Activated T-helper 2 cell treated with anti-CD3 and anti-CD28 coated beads, Interferon-gamma antibody, Interleukin-2, Interleukin-4, amounts not matched to agents 10 μg/mL and 5 μg/mL and 100 μg/mL, durations not matched to agents 14 hours and 24 hours and 36 hours (primary cell): ENCODE measurements at regions of chr14 and their contacts with region 1.

Region 1: DNA sequence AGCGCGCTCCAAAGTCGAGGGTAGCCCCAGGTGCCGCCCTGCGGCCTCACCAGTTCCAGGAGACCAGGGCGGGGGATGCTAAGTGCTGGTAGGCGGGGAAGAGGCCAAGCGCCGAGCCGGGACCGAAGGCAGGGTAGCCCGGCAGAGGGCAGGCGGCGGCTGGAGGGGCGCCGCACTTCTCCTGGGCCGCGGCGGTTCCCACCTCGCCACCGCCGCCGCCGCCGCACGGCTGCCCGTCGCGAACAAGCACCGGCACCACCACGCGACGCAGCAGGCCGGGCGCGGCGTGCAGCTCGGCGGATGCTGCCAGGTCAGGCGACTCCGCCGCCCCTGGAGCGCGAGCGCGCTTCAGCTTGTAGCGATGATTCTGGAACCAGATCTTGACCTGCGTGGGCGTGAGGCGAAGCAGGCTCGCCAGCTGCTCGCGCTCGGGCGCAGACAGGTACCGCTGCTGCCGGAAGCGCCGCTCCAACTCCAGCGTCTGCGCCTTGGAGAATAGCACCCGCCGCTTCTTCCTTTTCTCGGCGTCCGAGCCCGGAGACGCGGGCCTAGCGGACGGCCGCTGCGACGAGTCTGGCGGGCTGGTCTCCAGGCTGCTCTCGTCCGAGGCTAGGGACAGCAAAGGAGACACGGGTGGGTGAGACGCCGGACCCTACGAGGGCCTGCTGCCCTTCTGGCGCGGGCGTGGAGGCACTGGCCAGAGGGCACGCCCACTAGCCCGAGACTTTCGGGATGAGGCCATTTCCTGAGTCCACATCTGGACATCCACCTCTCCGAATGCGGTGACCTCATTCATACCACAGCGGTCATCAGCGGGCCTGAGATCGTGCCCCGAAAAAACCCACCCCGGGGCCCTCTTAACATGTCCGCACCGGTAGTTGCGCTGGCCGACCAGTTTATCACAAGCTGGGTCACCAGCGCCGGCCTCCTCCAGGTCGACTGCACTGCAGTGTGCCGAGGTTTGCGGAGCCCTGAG is 1.3 kb downstream of the NKX2-8 start:
- DNase-seq: no peak
- H3K4me3 Mint-ChIP-seq: no peak overlapping the region
- H3K27ac Mint-ChIP-seq: no peak overlapping the region
- H3K4me1 Mint-ChIP-seq: no peaks in the 10 kb centered on the region
- H3K27me3 Mint-ChIP-seq: peaks cover 61% of the 10 kb centered on the region

Region 2: GRCh38 chr14:36442824-36443241 is 138.3 kb before region 1 on chr14:
- intact Hi-C with region 1: no loop called
- DNase-seq: no peak
- H3K4me3 Mint-ChIP-seq: no peak overlapping the region
- H3K27ac Mint-ChIP-seq: no peak overlapping the region
- H3K4me1 Mint-ChIP-seq: no peaks in the 10 kb centered on the region
- H3K27me3 Mint-ChIP-seq: peaks cover 10% of the 10 kb centered on the region

Region 3: DNA sequence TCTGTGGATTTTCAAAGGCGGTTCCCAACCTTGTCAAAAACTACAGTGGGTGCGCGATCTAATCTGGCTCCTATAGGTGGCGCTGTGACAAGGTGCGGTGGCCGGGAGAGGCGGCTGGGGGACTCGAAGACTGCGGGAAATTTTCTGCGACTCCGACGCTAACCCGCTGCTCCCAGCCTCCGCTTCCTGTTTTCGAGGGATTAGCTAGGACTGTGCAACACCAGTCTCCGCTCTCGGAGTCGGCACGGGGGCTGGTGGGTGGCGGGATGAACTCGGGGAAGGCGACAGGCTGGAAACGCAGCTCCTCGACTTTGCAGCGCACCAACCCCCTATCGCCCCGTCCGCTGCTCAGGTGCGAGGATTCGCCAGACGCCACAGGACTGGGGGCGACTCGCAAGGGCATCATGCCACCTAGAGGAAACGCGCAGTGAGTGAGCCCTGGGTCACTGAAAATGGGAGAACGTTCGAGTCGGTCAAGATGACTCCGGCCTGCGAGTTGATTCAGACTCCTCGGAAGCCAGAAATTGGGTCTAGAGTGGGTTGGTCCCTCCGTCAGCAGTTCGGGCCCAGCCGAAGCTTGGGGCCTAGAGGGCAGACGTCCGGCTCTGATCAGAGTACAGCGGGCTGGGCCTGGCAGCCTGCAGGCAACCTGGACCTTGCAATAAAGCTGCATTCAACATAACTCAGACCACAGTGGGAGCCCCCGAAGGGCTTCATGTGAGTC is 75.0 kb after region 1 on chr14:
- intact Hi-C with region 1: loop called (anchors 2 kb)
- DNase-seq: no peak
- H3K4me3 Mint-ChIP-seq: no peak overlapping the region
- H3K27ac Mint-ChIP-seq: no peak overlapping the region
- H3K4me1 Mint-ChIP-seq: peaks cover 4% of the 10 kb centered on the region
- H3K27me3 Mint-ChIP-seq: peaks cover 91% of the 10 kb centered on the region

Region 4: DNA sequence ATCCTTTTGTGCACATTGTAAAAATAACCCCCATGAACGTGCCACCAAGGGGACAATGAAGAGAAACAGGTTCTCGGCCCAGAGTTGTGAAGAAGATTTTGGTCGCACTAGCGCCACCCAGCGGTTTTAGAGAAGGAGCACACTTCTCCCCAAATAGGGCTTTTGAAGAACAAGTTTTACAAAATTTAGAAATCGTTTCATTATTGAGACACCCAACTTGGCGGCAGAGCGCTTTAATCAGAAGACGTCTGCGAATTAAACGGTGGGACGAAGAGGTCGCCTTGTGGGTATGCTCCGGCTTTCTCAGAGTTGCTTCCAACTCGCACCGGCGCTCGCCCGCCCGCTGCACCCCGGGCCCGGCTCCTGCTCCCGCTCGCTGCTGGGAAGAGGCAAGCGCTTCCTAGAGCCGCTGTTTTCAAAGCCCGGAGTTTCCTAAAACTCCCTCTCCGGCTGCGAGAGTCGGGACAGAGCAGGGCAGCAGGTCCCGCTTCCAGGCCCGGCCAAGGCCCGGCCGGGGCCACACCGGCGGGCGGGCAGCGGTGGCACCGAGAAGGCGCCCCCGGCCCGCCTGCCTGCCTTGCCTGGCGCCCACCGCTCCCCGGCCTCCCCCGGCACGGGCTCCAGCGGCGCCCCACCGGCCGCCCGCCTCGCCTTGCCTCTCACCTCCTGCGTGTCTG is 1013.2 kb after region 1 on chr14:
- intact Hi-C with region 1: loop called (anchors 5 kb)
- DNase-seq: no peak
- H3K4me3 Mint-ChIP-seq: peak overlapping the region; percentile 65
- H3K27ac Mint-ChIP-seq: peak overlapping the region; percentile 55
- H3K4me1 Mint-ChIP-seq: peaks cover 7% of the 10 kb centered on the region
- H3K27me3 Mint-ChIP-seq: peaks cover 74% of the 10 kb centered on the region